Dendritic cell treated with granulocyte-macrophage colony-stimulating factor and Interleukin-4, amounts not matched to agents 40 ng/mL and 50 ng/mL, for 4 days (primary cell): ENCODE measurements at regions of chr6 and their contacts with region 1.

Region 1: DNA sequence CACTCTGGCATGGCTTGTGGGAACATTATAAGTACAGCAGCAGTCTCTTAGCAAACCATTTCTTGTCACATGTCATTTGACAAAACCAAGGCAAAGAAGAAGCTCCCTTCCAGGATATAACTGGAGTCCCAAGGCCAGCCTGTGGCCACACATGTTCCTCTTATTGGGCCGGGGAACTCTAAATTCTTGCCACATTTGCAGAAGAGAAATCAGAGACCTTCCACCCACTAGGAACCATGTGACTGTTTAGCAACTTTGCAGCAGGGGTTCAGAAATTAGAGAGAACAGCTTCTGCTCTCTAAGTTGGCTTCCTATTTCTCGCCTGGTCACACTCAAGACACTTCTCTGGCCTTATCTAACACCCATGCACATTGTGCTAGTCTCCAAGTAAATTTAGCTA is 20.4 kb upstream of the MEP1A start:
- H3K4me3 Mint-ChIP-seq: no peak overlapping the region
- H3K27ac Mint-ChIP-seq: peak overlapping the region; percentile 76
- H3K4me1 Mint-ChIP-seq: peaks cover 57% of the 10 kb centered on the region
- H3K27me3 Mint-ChIP-seq: no peaks in the 10 kb centered on the region

Region 2: GRCh38 chr6:46734867-46735719 is 37.7 kb before region 1 on chr6 and contains the start of gene PLA2G7:
- intact Hi-C with region 1: loop called (anchors 2 kb)
- H3K4me3 Mint-ChIP-seq: peak within 1 kb of the TSS; percentile 73
- H3K27ac Mint-ChIP-seq: peak within 1 kb of the TSS; percentile 70
- H3K4me1 Mint-ChIP-seq: peaks cover 75% of the 10 kb centered on the region
- H3K27me3 Mint-ChIP-seq: peaks cover 6% of the 10 kb centered on the region